MCF 10A (cell line): ENCODE measurements at regions of chr20 and their contacts with region 1.

Region 1: GRCh38 chr20:56247948-56248782 is at the start of gene MC3R:
- DNase-seq: peak; percentile 68
- H3K4me3 Mint-ChIP-seq: no peak within 1 kb of the TSS
- H3K27ac Mint-ChIP-seq: no peak within 1 kb of the TSS
- H3K4me1 Mint-ChIP-seq: peaks cover 21% of the 10 kb centered on the region
- H3K27me3 Mint-ChIP-seq: peaks cover 35% of the 10 kb centered on the region
- CTCF ChIP-seq: peak; percentile 72
- total RNA-seq, gene MC3R: not detected in 2 replicates

Region 2: GRCh38 chr20:56202493-56203077 is 45.6 kb before region 1 on chr20:
- CTCF ChIA-PET with region 1: interaction called, 50 read pairs
- POLR2A ChIA-PET with region 1: no interaction called
- intact Hi-C with region 1: loop called (anchors 1 kb)
- DNase-seq: peak; percentile 63
- H3K4me3 Mint-ChIP-seq: no peak overlapping the region
- H3K27ac Mint-ChIP-seq: no peak overlapping the region
- H3K4me1 Mint-ChIP-seq: no peaks in the 10 kb centered on the region
- H3K27me3 Mint-ChIP-seq: no peaks in the 10 kb centered on the region
- CTCF ChIP-seq: peak; percentile 73

Region 3: DNA sequence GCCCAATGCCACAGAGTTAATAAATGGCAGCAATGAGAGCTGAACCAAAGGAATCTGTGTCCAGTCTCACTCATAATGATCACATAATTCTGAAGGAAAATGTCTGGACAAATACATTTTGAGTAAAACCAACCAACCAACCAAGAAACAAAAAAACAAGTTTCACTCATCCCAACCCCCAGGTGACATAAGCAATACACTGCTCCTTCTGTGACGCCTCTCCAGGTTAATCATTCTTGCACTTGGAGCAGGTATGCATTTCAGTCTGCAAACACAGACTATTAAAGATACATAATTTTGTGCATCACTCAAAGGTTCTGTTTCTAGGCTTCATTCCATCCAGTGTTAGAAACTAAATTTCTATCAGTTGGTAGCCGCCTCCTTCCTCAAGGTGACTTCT is 34.8 kb before region 1 on chr20:
- CTCF ChIA-PET with region 1: interaction called, 12 read pairs
- POLR2A ChIA-PET with region 1: no interaction called
- intact Hi-C with region 1: no loop called
- DNase-seq: no peak
- H3K4me3 Mint-ChIP-seq: no peak overlapping the region
- H3K27ac Mint-ChIP-seq: no peak overlapping the region
- H3K4me1 Mint-ChIP-seq: no peaks in the 10 kb centered on the region
- H3K27me3 Mint-ChIP-seq: no peaks in the 10 kb centered on the region
- CTCF ChIP-seq: no peak

Region 4: GRCh38 chr20:56229812-56230211 is 18.4 kb before region 1 on chr20:
- CTCF ChIA-PET with region 1: interaction called, 33 read pairs
- POLR2A ChIA-PET with region 1: interaction called, 3 read pairs
- intact Hi-C with region 1: no loop called
- DNase-seq: peak; percentile 27
- H3K4me3 Mint-ChIP-seq: peak overlapping the region; percentile 19
- H3K27ac Mint-ChIP-seq: peak overlapping the region; percentile 23
- H3K4me1 Mint-ChIP-seq: peaks cover 29% of the 10 kb centered on the region
- H3K27me3 Mint-ChIP-seq: no peaks in the 10 kb centered on the region
- CTCF ChIP-seq: no peak

Region 5: DNA sequence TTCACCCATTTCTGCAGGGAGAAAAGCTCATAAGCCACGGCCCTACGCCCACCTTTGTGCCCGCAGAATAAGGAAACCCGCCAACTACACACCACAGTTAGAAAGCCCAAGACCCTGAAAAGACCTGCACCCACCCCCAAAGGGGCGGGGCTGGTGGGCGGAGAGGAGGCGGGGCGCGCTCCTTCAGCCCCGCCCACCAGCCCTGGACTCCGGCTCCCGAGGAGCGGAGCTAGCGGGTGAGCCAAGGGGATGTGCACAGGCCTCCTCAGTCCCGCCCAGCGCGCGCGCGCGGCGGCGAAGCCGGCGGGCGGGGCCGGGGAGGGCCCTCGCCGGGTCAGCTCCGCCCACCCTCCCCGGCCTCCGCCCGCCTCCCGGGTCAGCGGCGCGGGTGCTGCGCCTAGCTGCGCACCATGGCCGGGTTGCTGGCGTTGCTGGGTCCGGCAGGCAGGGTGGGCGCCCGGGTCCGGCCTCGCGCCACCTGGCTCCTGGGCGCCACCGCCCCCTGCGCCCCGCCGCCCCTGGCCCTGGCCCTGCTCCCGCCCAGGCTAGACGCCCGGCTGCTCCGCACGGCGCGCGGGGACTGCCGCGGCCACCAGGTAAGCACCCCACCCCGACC is 110.5 kb after region 1 on chr20 and contains the start of gene FAM210B:
- CTCF ChIA-PET with region 1: interaction called, 29 read pairs
- POLR2A ChIA-PET with region 1: interaction called, 4 read pairs
- intact Hi-C with region 1: no loop called
- DNase-seq: peak; percentile 90
- H3K4me3 Mint-ChIP-seq: peak within 1 kb of the TSS; percentile 84
- H3K27ac Mint-ChIP-seq: peak within 1 kb of the TSS; percentile 30
- H3K4me1 Mint-ChIP-seq: peaks cover 11% of the 10 kb centered on the region
- H3K27me3 Mint-ChIP-seq: no peaks in the 10 kb centered on the region
- CTCF ChIP-seq: no peak
- total RNA-seq, gene FAM210B: 37.7 and 38.2 TPM in 2 replicates